ENCODE measurements at regions of chr20 and their contacts with region 1.

Region 1: GRCh38 chr20:50563133-50563944 is 53.2 kb downstream of the PTPN1 start:
- DNase-seq: no peak
- H3K4me3 Mint-ChIP-seq: no peak overlapping the region
- H3K27ac Mint-ChIP-seq: no peak overlapping the region
- H3K4me1 Mint-ChIP-seq: peaks cover 35% of the 10 kb centered on the region
- H3K27me3 Mint-ChIP-seq: no peaks in the 10 kb centered on the region
- CTCF ChIP-seq: no peak

Region 2: DNA sequence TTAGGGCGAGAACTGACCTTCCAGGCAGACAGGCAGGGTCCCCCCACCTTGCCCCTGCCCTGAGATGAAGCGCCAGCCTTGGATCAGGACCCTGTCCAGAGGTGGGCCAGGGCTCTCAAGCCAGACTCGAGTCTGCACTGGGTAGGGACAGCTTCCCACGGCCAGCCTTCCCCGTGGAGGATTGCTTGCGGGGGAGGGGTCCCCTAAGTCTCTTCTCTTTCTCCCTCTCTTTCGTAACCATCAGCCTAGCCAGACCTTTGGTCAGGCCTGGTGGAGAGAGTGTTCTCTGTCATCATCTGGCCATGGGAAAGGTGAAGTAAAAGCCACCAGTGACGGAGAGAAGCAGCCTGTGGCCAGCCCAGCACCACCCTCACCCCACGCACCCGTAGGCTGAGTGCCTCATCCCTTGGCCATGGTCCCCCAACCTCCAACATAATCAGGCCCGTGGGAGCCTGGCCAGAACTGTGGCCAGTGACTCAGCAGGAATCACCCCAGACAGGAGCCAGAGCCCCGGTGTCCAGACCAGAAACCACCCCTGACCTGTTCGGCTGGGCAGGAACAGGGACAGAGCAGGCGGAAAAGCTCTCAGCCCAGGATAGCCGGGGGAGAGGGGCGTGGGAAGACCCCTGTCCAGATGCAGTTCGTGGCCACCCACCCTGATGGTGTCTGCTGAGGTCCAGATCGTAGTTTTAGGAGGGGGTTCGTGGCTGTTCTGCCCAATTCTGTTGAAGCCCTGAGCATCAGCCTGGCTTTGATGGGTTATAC is 533.5 kb before region 1 on chr20:
- CTCF ChIA-PET with region 1: interaction called, 10 read pairs
- intact Hi-C with region 1: no loop called
- DNase-seq: peak; percentile 58
- H3K4me3 Mint-ChIP-seq: no peak overlapping the region
- H3K27ac Mint-ChIP-seq: peak overlapping the region; percentile 46
- H3K4me1 Mint-ChIP-seq: peaks cover 56% of the 10 kb centered on the region
- H3K27me3 Mint-ChIP-seq: no peaks in the 10 kb centered on the region
- CTCF ChIP-seq: no peak

Region 3: GRCh38 chr20:50308513-50309279 is 254.6 kb before region 1 on chr20:
- CTCF ChIA-PET with region 1: no interaction called
- intact Hi-C with region 1: no loop called
- DNase-seq: peak; percentile 80
- H3K4me3 Mint-ChIP-seq: no peak overlapping the region
- H3K27ac Mint-ChIP-seq: peak overlapping the region; percentile 20
- H3K4me1 Mint-ChIP-seq: peaks cover 65% of the 10 kb centered on the region
- H3K27me3 Mint-ChIP-seq: peaks cover 15% of the 10 kb centered on the region
- CTCF ChIP-seq: no peak